Adrenal gland (tissue), 19 donors: ENCODE measurements at regions of chr19 and their contacts with region 1.

Region 1: GRCh38 chr19:16035601-16036297 is 40.5 kb upstream of the TPM4 start:
- DNase-seq: peak in 1 of 7 donors; percentile 5
- H3K4me3 ChIP-seq: no peak overlapping the region
- H3K27ac ChIP-seq: no peak overlapping the region
- H3K4me1 ChIP-seq: no peaks in the 10 kb centered on the region
- H3K27me3 ChIP-seq: no peaks in the 10 kb centered on the region
- CTCF ChIP-seq: no peak
- POLR2A ChIP-seq: no peak

Region 2: GRCh38 chr19:15629003-15629880 is 406.5 kb before region 1 on chr19:
- intact Hi-C with region 1: loop called in 1 of 2 experiments (anchors 10 kb)
- DNase-seq: peak; percentile 62 to 86 (median 78)
- H3K4me3 ChIP-seq: no peak overlapping the region
- H3K27ac ChIP-seq: no peak overlapping the region
- H3K4me1 ChIP-seq: no peaks in the 10 kb centered on the region
- H3K27me3 ChIP-seq: peaks cover 9% of the 10 kb centered on the region
- CTCF ChIP-seq: peak; percentile 93 to 98 (median 97)
- POLR2A ChIP-seq: no peak

Region 3: DNA sequence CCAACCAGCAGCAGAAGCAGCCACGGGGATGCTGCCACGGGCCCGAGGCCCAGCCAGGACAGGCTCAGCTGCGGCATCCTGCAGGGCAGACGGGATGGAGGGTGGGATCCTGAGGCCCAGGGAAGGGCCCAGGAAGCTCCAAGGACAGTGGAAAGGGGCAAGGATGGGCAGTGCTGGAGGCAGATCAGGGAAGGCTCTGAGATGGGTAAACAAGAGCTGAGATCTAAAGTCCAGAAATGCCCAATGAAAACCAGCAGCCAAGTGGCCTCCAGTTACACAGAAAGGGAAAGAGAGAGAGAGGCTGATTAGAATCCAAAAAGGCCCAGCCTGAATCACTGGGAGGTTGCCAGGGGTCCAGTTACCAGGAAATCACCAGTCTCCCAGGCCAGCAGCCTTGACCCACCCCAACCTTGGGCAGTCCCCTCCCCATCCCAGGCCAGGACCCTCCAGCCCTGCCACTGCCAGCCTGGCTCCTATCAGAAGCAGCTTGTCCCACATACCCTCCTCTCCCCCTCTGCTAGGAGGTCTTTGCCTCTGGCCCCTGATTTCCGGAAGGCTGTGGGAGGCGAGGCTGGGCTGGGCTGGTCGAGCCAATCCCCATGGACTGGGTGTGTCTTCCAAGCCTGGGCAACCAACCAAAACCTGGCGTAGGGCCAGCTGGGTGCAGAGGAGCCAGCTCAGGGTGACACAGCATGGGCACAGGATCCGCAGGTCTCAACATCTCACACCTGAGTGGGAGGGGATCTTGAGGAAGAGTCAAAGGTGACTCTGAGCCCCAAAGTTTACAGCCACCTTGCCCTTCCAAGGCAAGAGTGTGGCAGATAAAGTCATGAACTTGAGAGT is 101.2 kb before region 1 on chr19 and contains the start of gene CYP4F11:
- intact Hi-C with region 1: no loop called
- DNase-seq: peak; percentile 26 to 94 (median 68)
- H3K4me3 ChIP-seq: peak within 1 kb of the TSS in 1 of 4 donors; percentile 10
- H3K27ac ChIP-seq: peak within 1 kb of the TSS in 3 of 5 donors; percentile 32 to 84 (median 41)
- H3K4me1 ChIP-seq: no peaks in the 10 kb centered on the region
- H3K27me3 ChIP-seq: peaks cover 13% of the 10 kb centered on the region
- CTCF ChIP-seq: no peak
- POLR2A ChIP-seq: no peak
- total RNA-seq, gene CYP4F11: 0.18 to 10.5 (median 4.2) TPM in 7 of 9 donors, not detected in the others

Region 4: DNA sequence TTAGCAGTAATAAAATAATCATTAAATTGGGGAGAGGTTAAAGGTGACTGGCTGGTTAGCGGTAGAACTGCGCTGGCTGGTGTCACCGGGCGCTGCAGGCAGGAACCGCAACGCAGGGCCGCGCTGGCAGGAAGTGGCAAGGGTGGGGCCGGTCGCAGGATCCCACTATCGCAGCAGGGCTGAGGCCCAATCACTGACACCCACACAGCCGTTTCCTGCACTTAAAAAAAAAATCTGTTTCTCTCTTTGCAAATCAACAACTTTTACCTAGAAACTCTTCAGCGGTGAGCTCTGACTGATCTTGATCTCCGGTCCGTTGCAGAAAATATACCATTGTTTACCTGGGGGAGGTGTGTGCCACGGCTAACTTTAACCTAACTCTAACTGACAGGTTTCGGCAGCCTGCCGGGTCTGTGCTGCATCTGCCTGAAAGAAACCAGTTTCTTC is 335.8 kb after region 1 on chr19:
- intact Hi-C with region 1: loop called in 1 of 2 experiments (anchors 10 kb)
- DNase-seq: peak in 5 of 7 donors; percentile 44 to 69 (median 53)
- H3K4me3 ChIP-seq: no peak overlapping the region
- H3K27ac ChIP-seq: peak overlapping the region in 1 of 5 donors; percentile 80
- H3K4me1 ChIP-seq: peaks cover 8 to 38% of the 10 kb centered on the region in 2 donors
- H3K27me3 ChIP-seq: no peaks in the 10 kb centered on the region
- CTCF ChIP-seq: no peak
- POLR2A ChIP-seq: no peak